Aorta (tissue), 5 donors: ENCODE measurements at regions of chr5 and their contacts with region 1.

Region 1: DNA sequence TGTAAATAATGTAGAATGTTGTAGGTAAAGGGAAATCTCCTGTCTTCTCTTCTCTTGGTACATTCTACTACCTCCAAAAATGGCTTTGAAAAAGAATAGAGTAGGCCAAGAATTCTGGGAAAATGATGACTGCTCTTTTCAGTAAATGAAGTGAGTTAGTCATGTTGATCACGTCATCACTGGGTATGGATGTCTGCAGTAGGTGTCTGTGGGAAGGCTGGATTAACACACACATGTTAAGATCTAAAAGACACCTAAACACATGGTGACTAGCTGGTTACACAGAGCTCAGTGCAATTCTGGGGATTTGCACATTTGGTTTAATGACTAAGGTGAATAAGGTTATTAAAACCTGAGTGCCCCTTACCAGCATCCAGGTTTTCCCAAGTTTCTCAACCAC is 161.5 kb downstream of the CEP120 start:
- DNase-seq: no peak
- ATAC-seq: no peak
- H3K4me3 ChIP-seq: no peak overlapping the region
- H3K27ac ChIP-seq: peak overlapping the region in 1 of 2 donors; percentile 76
- H3K4me1 ChIP-seq: peaks cover 6 to 11% of the 10 kb centered on the region in 2 donors
- H3K27me3 ChIP-seq: no peaks in the 10 kb centered on the region

Region 2: DNA sequence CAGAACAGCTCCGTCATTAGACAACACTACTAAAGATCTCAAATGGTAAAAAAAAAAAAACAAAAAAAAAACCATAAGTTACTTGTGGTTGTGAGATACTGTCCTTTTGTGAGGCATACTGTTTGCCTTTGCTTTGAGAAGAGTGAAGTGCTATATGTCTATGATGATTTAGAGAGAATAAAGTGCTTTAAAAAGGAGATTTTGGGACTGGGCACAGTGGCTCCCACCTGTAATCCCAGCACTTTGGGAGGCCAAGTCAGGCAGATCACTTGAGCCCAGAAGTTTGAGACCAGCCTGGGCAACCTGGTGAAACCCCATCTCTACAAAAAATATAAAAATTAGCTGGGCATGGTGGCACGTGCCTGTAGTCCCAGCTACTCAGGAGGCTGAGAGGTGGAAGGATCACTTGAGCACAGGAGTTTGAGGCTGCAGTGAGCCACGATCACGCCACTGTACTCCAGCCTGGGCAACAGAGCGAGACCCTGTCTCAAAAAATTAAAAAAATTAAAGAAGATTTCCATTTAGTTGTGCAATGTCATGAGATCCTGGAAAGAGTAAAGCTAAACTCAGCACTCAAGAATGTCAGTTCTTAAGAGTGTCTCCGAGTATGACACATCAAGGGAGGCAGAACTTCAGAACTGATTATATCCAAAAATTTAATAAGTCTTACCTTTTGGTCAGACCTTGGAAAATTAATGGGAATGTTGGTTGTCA is 85.4 kb before region 1 on chr5:
- intact Hi-C with region 1: loop called in 1 of 2 experiments (anchors 10 kb)
- DNase-seq: no peak
- ATAC-seq: no peak
- H3K4me3 ChIP-seq: no peak overlapping the region
- H3K27ac ChIP-seq: no peak overlapping the region
- H3K4me1 ChIP-seq: peaks cover 1 to 15% of the 10 kb centered on the region in 2 donors
- H3K27me3 ChIP-seq: no peaks in the 10 kb centered on the region

Region 3: DNA sequence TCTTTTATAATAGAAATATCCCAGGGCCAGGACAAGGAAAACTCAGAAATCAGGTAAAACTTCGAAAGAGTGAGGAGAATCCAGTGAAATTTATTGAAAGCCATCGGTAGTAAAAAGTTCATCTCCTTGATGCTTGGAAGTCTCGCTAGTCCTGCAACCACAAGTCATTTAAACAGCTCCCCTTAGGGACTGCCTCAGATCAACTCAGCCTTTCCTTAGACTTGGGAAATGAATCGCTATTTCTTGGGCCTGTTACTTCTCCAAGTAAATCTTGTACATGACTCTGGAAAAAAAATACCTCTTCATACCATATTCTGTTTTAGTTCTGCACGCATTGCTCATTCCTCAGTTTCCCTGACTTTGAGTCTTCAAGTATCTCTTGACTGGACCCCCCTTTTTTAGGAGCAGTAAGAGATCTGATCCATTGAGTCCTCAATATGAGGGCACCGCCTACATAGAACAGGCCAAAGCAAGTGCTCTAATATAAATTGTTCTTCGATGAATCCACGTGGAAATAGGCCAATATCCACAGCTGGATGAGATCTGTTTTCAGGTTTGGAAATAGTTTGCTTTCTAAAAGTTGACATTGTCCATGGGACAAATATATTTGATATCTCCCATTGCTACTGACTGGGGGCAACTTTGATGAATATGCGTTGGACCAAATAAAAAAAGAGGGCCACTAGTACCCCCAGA is 58.5 kb before region 1 on chr5:
- intact Hi-C with region 1: loop called in 1 of 2 experiments (anchors 5 kb)
- DNase-seq: no peak
- ATAC-seq: no peak
- H3K4me3 ChIP-seq: no peak overlapping the region
- H3K27ac ChIP-seq: peak overlapping the region in 1 of 2 donors; percentile 47
- H3K4me1 ChIP-seq: peaks cover 1 to 6% of the 10 kb centered on the region in 2 donors
- H3K27me3 ChIP-seq: no peaks in the 10 kb centered on the region